Ovary (tissue), 10 donors: ENCODE measurements at regions of chr21 and their contacts with region 1.

Region 1: DNA sequence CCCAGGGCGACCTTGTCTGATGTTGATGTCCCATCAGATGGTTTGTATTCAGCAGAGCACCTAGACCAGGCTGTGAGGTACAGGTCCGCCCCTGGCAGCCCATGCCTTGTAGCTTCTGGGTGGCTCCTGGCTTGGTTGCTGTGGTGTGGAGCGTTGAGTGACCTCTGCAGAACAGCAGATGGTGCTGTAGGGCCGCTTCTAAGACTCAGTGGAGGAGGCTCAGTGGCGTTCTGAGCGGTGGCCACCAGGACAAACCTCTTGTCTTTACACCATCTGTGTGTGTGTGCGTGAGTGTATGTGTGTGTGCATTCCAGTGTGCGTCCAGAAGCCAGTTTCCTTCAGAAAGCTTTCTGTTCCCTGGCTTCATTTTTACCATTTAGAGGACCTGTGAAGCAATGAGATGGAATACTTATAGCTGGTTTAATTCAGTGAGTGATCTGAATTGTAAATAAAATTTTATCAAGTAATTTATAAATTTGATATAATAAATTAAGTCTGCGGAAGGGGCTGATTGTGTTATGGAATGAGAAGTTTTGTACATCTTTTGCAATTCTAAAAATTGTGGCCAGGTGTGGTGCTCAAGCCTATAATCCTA is 66.1 kb downstream of the ADARB1 start:
- DNase-seq: peak; percentile 65 to 80 (median 72)
- H3K4me3 ChIP-seq: no peak overlapping the region
- H3K27ac ChIP-seq: no peak overlapping the region
- H3K4me1 ChIP-seq: no peaks in the 10 kb centered on the region
- H3K27me3 ChIP-seq: no peaks in the 10 kb centered on the region
- CTCF ChIP-seq: peak; percentile 57 to 73 (median 67)
- EP300 ChIP-seq: no peak
- POLR2A ChIP-seq: no peak

Region 2: GRCh38 chr21:45033791-45034555 is 106.5 kb before region 1 on chr21:
- intact Hi-C with region 1: loop called in 1 of 4 experiments (anchors 10 kb)
- DNase-seq: peak in 2 of 5 donors; percentile 22 to 49
- H3K4me3 ChIP-seq: no peak overlapping the region
- H3K27ac ChIP-seq: peak overlapping the region in 1 of 2 donors; percentile 26
- H3K4me1 ChIP-seq: peaks cover 20% of the 10 kb centered on the region
- H3K27me3 ChIP-seq: no peaks in the 10 kb centered on the region
- CTCF ChIP-seq: no peak
- EP300 ChIP-seq: no peak
- POLR2A ChIP-seq: no peak

Region 3: DNA sequence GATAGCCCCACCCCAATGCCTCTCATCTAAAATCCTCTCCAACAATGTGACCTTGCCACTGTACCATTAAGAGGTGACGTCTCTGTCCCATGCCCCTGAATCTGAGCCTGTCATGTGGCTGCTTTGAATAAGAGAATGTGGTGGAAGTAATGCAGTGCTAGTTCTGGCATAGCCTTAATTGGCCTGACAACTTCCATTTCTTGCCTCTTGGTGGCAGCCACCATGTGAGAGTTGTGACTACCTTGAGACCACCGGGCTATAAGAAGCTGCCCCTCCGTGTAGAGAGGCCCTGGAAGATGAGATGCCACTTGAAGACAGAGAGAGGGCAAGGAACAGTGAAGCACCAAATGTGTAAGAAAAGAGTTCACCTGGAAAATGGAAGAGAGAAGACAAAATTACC is 51.9 kb after region 1 on chr21:
- intact Hi-C with region 1: no loop called
- DNase-seq: no peak
- H3K4me3 ChIP-seq: no peak overlapping the region
- H3K27ac ChIP-seq: no peak overlapping the region
- H3K4me1 ChIP-seq: no peaks in the 10 kb centered on the region
- H3K27me3 ChIP-seq: no peaks in the 10 kb centered on the region
- CTCF ChIP-seq: no peak
- EP300 ChIP-seq: no peak
- POLR2A ChIP-seq: no peak

Region 4: DNA sequence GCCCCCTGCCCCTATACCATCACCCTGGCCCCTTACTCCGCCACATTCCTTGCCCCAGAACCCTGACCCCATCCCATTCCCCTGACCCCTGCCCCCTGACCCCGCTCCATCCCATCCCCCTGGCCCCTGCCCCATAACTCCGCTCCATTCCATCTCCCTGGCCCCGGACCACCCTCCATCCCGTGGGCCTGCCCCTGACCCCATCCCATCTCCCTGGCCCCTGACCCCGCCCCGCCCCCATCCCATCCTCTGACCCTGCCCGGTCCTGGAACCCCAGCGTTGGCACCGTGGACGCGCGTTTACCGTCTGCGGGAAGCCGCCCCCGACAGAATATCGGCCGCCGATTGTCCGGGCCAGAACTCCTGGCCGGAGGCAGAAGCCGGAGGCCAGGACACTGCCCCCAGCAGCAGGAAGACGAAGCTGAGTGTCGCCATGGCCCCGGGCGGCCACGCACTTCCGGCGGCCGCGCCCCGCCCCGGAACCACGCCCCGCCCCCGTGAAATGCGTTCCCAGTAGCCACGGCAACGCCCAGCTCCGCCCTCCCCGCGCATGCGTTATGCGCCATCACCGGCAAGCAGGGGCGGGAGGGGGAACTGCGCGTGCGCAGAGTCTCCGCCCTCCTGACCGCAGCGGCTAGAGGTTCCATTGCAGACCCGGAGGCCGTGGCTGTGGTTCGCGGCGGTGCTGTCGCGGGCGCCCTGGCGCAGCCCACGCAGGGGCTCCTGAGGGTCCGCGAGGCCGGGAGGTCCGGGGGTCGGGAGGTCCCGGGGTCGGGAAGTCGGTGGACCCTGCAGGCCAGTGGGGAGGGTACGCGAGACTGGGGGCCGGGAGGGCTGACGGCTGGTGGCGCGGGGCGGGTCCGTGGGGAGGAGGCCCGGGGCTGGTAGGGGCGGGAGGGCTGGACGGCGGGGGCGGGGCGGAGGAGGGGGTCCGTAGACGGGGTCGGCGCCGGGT is 147.3 kb after region 1 on chr21 and contains the start of gene POFUT2:
- intact Hi-C with region 1: loop called in 1 of 4 experiments (anchors 5 kb)
- DNase-seq: peak; percentile 97 to 99 (median 99)
- H3K4me3 ChIP-seq: peak within 1 kb of the TSS; percentile 79
- H3K27ac ChIP-seq: peak within 1 kb of the TSS; percentile 30 to 53
- H3K4me1 ChIP-seq: peaks cover 10% of the 10 kb centered on the region
- H3K27me3 ChIP-seq: no peaks in the 10 kb centered on the region
- CTCF ChIP-seq: no peak
- EP300 ChIP-seq: no peak
- POLR2A ChIP-seq: peak; percentile 82
- total RNA-seq, gene POFUT2: 26.2 to 48.2 (median 40.1) TPM

Region 5: GRCh38 chr21:45454926-45455673 is 314.7 kb after region 1 on chr21:
- intact Hi-C with region 1: loop called in 1 of 4 experiments (anchors 10 kb)
- DNase-seq: peak in 2 of 5 donors; percentile 55 to 75
- H3K4me3 ChIP-seq: peak overlapping the region; percentile 27
- H3K27ac ChIP-seq: no peak overlapping the region
- H3K4me1 ChIP-seq: peaks cover 18% of the 10 kb centered on the region
- H3K27me3 ChIP-seq: no peaks in the 10 kb centered on the region
- CTCF ChIP-seq: no peak
- EP300 ChIP-seq: no peak
- POLR2A ChIP-seq: no peak